Panc1 (cell line): ENCODE measurements at regions of chr1 and their contacts with region 1.

Region 1: DNA sequence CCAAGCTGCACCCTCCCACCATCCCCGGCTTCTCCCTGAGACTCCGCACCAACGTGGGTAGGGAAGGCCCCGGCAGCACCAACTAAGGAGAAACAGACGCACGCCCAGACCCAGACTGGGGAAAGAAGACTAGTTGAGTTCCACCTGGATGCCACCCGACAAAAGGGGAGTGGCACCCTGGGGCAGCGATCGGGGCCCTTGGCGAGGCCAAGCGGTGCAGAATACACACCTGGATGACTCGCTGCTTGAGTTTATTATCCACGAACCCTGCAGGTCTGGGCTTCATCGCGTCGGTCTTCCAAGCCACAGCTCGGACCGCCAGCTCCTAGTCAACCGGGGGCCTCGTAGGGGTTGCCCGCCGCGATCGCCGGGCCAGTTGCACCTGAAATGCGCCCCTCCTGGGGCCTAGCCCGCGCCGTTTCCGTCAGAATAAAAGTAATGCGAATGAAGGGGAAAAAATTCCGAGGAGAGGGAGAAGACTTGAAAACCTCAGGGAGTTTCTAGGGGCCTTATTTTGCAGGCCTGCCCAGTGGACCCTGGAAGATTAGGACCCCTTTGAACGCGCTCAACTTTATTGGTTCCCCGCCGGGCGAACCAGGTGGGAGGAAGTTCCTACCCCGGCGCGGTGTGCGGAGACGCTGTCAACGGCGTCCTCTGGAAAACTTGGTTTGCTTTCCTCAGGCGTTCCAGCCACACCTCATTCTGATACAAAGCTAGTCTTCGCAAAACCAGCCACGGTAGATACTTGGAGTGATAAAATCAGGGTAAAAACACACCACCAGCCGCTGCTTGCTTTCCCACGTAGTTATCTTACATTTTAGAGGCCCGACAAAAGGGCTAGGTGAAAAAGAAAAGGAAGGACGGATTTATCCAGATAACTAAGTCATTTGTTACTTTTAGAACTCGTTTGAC is at the start of gene NVL:
- DNase-seq: peak; percentile 74
- ATAC-seq: peak; percentile 97
- H3K4me3 ChIP-seq: peak within 1 kb of the TSS; percentile 98 to 100
- H3K27ac ChIP-seq: peak within 1 kb of the TSS; percentile 99
- H3K4me1 ChIP-seq: peaks cover 16% of the 10 kb centered on the region
- H3K27me3 ChIP-seq: no peaks in the 10 kb centered on the region
- CTCF ChIP-seq: no peak
- total RNA-seq, gene NVL: 25.0 TPM

Region 2: GRCh38 chr1:223712194-223712849 is 617.8 kb before region 1 on chr1 and contains the start of gene CAPN2:
- CTCF ChIA-PET with region 1: no interaction called
- POLR2A ChIA-PET with region 1: no interaction called
- in situ Hi-C with region 1: no loop called
- intact Hi-C with region 1: loop called (anchors 10 kb)
- DNase-seq: no peak
- ATAC-seq: peak; percentile 81
- H3K4me3 ChIP-seq: peak within 1 kb of the TSS; percentile 74 to 93
- H3K27ac ChIP-seq: peak within 1 kb of the TSS; percentile 96
- H3K4me1 ChIP-seq: peaks cover 66% of the 10 kb centered on the region
- H3K27me3 ChIP-seq: no peaks in the 10 kb centered on the region
- CTCF ChIP-seq: peak; percentile 85
- total RNA-seq, gene CAPN2: 171 TPM

Region 3: DNA sequence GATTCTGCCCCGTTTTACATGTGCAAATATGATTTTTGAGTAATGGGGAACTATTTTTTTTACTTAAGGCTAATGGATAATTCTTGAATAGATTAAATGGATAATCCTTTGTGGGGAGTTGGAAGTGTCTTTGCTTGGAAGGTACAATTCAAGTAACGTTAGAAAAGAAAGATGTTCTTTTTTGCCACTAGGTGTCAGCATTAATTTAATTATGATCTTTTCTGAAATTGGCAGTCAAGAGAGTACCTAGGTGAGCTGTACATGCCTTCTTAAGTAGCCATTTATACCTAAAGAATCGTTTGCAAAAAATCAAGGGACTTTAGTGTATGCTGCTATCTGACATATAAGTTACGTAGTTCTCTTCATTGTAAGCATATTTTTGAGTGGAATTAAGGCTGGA is 214.0 kb before region 1 on chr1:
- CTCF ChIA-PET with region 1: interaction called, 5 read pairs
- POLR2A ChIA-PET with region 1: no interaction called
- in situ Hi-C with region 1: no loop called
- intact Hi-C with region 1: loop called (anchors 1 kb)
- DNase-seq: peak; percentile 63
- ATAC-seq: no peak; the same call in 1 of the 2 replicates
- H3K4me3 ChIP-seq: no peak overlapping the region; a peak in 1 of 4 replicates
- H3K27ac ChIP-seq: no peak overlapping the region
- H3K4me1 ChIP-seq: peaks cover 15% of the 10 kb centered on the region
- H3K27me3 ChIP-seq: no peaks in the 10 kb centered on the region
- CTCF ChIP-seq: peak; percentile 67; the same call in 1 of the 2 replicates

Region 4: DNA sequence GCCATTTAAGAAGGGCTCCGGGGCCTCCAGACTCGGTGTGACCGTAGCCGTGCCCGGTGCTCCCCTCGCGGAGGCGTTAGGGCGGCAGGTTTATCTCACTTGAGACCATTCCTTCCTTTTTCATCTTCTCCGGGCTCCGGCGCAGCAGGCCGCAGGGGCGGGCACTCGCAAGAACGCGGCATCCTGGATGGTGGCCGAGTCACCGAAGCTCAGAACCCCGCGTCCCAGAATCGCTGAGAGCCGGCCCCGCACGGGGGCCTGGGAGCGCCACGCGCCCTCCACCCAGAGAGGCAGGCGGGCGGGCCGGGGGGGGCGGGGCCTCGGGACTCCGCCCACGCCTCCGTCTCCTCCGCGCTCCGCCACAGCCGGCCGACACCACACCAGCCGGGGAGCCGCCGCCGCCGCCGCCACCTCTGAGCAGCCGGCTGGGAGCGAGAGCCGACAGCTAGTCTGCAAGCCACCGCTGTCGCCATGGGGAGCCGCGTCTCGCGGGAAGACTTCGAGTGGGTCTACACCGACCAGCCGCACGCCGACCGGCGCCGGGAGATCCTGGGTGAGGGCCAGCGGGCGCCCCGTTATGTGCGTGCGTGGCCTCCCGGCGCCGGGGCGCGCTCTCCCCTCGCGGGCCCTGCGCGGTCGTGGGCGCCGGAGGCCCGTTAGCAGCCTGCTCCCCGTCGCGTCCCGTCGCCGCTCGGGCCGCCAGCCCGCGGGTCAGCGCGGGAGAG is 147.1 kb before region 1 on chr1 and contains the start of gene DEGS1:
- CTCF ChIA-PET with region 1: no interaction called
- POLR2A ChIA-PET with region 1: no interaction called
- in situ Hi-C with region 1: no loop called
- intact Hi-C with region 1: loop called (anchors 10 kb)
- DNase-seq: no peak
- ATAC-seq: peak; percentile 95
- H3K4me3 ChIP-seq: peak within 1 kb of the TSS; percentile 81 to 87
- H3K27ac ChIP-seq: peak within 1 kb of the TSS; percentile 88
- H3K4me1 ChIP-seq: 0 out of 2 replicates have a peak, but pooled peaks cover 6% of the 10 kb centered on the region
- H3K27me3 ChIP-seq: no peaks in the 10 kb centered on the region
- CTCF ChIP-seq: no peak
- total RNA-seq, gene DEGS1: 82.8 TPM